IMR-90 (cell line): ENCODE measurements at regions of chr2 and their contacts with region 1.

Region 1: GRCh38 chr2:108575132-108575966 is 41.1 kb downstream of the LIMS1 start:
- DNase-seq: peak; percentile 95
- ATAC-seq: peak; percentile 50
- H3K4me3 ChIP-seq: no peak overlapping the region
- H3K27ac ChIP-seq: peak overlapping the region; percentile 60; the same call in 1 of the 2 replicates
- H3K4me1 ChIP-seq: peaks cover 37% of the 10 kb centered on the region
- H3K27me3 ChIP-seq: no peaks in the 10 kb centered on the region
- CTCF ChIP-seq: no peak
- POLR2A ChIP-seq: no peak
- RAD21 ChIP-seq: no peak

Region 2: GRCh38 chr2:108533832-108534583 is 41.3 kb before region 1 on chr2 and contains the start of gene LIMS1:
- CTCF ChIA-PET with region 1: interaction called, 4 read pairs
- POLR2A ChIA-PET with region 1: interaction called, 12 read pairs
- dilution Hi-C with region 1: no loop called
- in situ Hi-C with region 1: no loop called
- intact Hi-C with region 1: loop called (anchors 2 kb)
- DNase-seq: peak; percentile 82
- ATAC-seq: peak; percentile 94
- H3K4me3 ChIP-seq: peak within 1 kb of the TSS; percentile 95
- H3K27ac ChIP-seq: peak within 1 kb of the TSS; percentile 93
- H3K4me1 ChIP-seq: peaks cover 10% of the 10 kb centered on the region
- H3K27me3 ChIP-seq: no peaks in the 10 kb centered on the region
- CTCF ChIP-seq: no peak
- POLR2A ChIP-seq: peak; percentile 97
- RAD21 ChIP-seq: no peak
- total RNA-seq, gene LIMS1: 125 and 131 TPM in 2 replicates

Region 3: GRCh38 chr2:108594132-108594981 is 19.0 kb after region 1 on chr2:
- CTCF ChIA-PET with region 1: interaction called, 4 read pairs
- POLR2A ChIA-PET with region 1: interaction called, 13 read pairs
- dilution Hi-C with region 1: no loop called
- in situ Hi-C with region 1: no loop called
- intact Hi-C with region 1: no loop called
- DNase-seq: peak; percentile 93
- ATAC-seq: peak; percentile 69
- H3K4me3 ChIP-seq: no peak overlapping the region
- H3K27ac ChIP-seq: peak overlapping the region; percentile 58
- H3K4me1 ChIP-seq: peaks cover 14% of the 10 kb centered on the region
- H3K27me3 ChIP-seq: no peaks in the 10 kb centered on the region
- CTCF ChIP-seq: no peak
- POLR2A ChIP-seq: no peak
- RAD21 ChIP-seq: no peak

Region 4: DNA sequence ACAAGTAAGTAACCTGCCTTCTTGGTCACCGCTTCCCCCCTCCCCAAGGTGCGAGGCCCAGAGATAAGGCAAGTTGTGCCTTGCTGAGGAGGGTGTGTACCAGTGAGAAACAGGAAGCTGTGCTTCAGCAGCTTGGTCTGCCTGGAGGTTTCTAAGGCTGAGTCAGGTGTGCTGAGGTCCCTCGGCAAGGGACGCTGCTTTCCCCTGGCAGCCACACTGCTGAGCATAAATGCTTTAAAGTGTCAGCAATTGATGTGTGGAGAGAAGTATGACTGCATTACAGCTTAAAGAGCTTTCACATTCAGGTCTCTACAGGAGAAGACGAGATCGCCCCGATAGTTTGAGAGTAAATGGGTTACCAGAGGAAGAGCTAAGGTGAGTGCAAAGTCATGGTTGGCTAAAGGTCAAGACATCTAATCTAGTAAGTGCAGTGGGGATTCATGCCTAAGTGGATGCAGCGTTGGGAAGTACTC is 45.8 kb after region 1 on chr2:
- CTCF ChIA-PET with region 1: no interaction called
- POLR2A ChIA-PET with region 1: no interaction called
- dilution Hi-C with region 1: no loop called
- in situ Hi-C with region 1: no loop called
- intact Hi-C with region 1: no loop called
- DNase-seq: peak; percentile 46
- ATAC-seq: no peak
- H3K4me3 ChIP-seq: no peak overlapping the region
- H3K27ac ChIP-seq: no peak overlapping the region
- H3K4me1 ChIP-seq: peaks cover 31% of the 10 kb centered on the region
- H3K27me3 ChIP-seq: no peaks in the 10 kb centered on the region
- CTCF ChIP-seq: no peak
- POLR2A ChIP-seq: no peak
- RAD21 ChIP-seq: no peak

Region 5: GRCh38 chr2:108701208-108701607 is 125.9 kb after region 1 on chr2:
- CTCF ChIA-PET with region 1: no interaction called
- POLR2A ChIA-PET with region 1: no interaction called
- dilution Hi-C with region 1: no loop called
- in situ Hi-C with region 1: no loop called
- intact Hi-C with region 1: no loop called
- DNase-seq: no peak
- ATAC-seq: no peak
- H3K4me3 ChIP-seq: no peak overlapping the region
- H3K27ac ChIP-seq: no peak overlapping the region
- H3K4me1 ChIP-seq: no peaks in the 10 kb centered on the region
- H3K27me3 ChIP-seq: no peaks in the 10 kb centered on the region
- CTCF ChIP-seq: no peak
- POLR2A ChIP-seq: no peak
- RAD21 ChIP-seq: no peak